ENCODE measurements at regions of chr19 and their contacts with region 1.

Region 1: GRCh38 chr19:21141787-21142464 is at the start of gene ZNF431:
- DNase-seq: peak; percentile 98
- H3K4me3 Mint-ChIP-seq: peak within 1 kb of the TSS; percentile 92
- H3K27ac Mint-ChIP-seq: peak within 1 kb of the TSS; percentile 97
- H3K4me1 Mint-ChIP-seq: peaks cover 16% of the 10 kb centered on the region
- H3K27me3 Mint-ChIP-seq: no peaks in the 10 kb centered on the region
- CTCF ChIP-seq: no peak
- total RNA-seq, gene ZNF431: 17.2 and 22.1 TPM in 2 replicates

Region 2: GRCh38 chr19:20923077-20923871 is 218.7 kb before region 1 on chr19 and contains the start of gene ZNF85:
- CTCF ChIA-PET with region 1: no interaction called
- POLR2A ChIA-PET with region 1: interaction called, 11 read pairs
- intact Hi-C with region 1: no loop called
- DNase-seq: peak; percentile 94
- H3K4me3 Mint-ChIP-seq: peak within 1 kb of the TSS; percentile 93
- H3K27ac Mint-ChIP-seq: peak within 1 kb of the TSS; percentile 97
- H3K4me1 Mint-ChIP-seq: no peaks in the 10 kb centered on the region
- H3K27me3 Mint-ChIP-seq: no peaks in the 10 kb centered on the region
- CTCF ChIP-seq: no peak
- total RNA-seq, gene ZNF85: 4.9 and 6.9 TPM in 2 replicates

Region 3: DNA sequence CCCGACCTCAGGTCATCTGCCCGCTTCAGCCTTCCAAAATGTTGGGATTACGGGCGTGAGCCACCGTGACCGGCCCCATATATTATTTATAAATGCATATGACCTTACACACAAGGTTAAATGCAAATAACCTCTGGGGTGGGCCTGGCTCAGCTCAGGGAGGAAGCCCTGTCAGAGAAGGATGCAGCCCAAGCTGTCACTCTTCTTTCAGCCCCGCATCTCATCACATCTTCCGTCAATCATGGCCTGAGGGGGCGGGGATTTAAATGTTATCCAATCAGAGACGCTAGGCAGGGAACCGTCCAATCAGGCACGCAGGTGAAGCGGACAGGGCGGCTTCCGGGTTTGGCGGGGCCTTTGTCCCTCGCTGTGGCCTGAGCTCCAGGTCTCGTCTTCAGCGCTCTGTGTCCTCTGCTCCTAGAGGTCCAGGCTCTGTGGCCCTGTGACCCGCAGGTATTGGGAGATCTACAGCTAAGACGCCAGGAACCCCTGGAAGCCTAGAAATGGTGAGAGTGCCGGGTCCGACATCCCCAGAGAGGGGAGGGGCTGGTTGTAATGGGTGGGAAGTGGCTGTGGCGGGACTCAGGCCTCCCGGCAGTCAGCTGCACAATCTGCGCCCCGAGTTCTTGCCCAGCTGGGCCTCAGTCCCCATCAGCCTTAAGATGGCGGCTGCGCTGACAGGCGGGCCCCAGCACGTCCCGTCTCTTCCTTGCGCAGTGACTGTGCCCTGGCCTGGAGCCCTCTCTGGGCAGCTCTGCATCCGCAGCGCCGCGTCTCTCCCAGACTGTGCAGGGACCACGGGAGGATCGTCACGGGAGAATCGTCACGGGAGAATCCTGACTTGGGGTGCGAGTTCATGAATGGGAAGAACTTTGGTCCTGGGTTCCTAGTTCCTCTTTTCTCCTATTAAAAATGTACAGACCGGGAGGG is 121.4 kb before region 1 on chr19 and contains the start of gene ZNF430:
- CTCF ChIA-PET with region 1: interaction called, 6 read pairs
- POLR2A ChIA-PET with region 1: interaction called, 72 read pairs
- intact Hi-C with region 1: loop called (anchors 2 kb)
- DNase-seq: peak; percentile 98
- H3K4me3 Mint-ChIP-seq: peak within 1 kb of the TSS; percentile 99
- H3K27ac Mint-ChIP-seq: peak within 1 kb of the TSS; percentile 100
- H3K4me1 Mint-ChIP-seq: peaks cover 24% of the 10 kb centered on the region
- H3K27me3 Mint-ChIP-seq: no peaks in the 10 kb centered on the region
- CTCF ChIP-seq: no peak
- total RNA-seq, gene ZNF430: 12.9 and 13.9 TPM in 2 replicates

Region 4: GRCh38 chr19:21082011-21082975 is 59.6 kb before region 1 on chr19 and contains the start of gene ZNF714:
- CTCF ChIA-PET with region 1: no interaction called
- POLR2A ChIA-PET with region 1: interaction called, 24 read pairs
- intact Hi-C with region 1: loop called (anchors 5 kb)
- DNase-seq: peak; percentile 95
- H3K4me3 Mint-ChIP-seq: peak within 1 kb of the TSS; percentile 94
- H3K27ac Mint-ChIP-seq: peak within 1 kb of the TSS; percentile 96
- H3K4me1 Mint-ChIP-seq: peaks cover 8% of the 10 kb centered on the region
- H3K27me3 Mint-ChIP-seq: no peaks in the 10 kb centered on the region
- CTCF ChIP-seq: no peak
- total RNA-seq, gene ZNF714: 10.0 and 11.0 TPM in 2 replicates

Region 5: DNA sequence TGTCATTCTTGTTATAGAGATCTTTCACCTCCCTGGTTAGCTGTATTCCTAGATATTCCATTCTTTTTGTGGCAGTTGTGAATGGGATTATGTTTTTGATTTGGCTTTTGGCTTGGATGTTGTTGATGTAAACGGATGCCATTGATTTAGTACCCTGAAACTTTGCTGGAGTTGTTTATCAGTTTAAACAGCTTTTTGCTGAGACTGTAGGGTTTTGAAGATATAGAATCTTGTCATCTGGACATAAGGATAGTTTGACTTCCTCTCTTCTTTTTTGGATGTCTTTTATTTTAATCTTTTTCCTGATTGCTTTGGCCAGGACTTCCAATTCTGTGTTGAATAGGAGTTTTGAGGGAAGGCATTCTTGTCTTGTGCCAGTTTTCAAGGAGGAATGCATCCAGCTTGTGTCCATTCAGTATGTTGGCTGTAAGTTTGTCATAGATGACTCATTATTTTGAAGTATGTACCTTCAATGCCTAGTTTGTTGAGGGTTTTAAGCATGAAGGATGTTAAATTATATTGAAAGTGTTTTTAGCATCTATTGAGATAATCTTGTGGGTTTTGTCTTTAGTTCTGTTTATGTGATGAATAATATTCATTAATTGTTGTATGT is 16.7 kb after region 1 on chr19:
- CTCF ChIA-PET with region 1: no interaction called
- POLR2A ChIA-PET with region 1: interaction called, 20 read pairs
- intact Hi-C with region 1: no loop called
- DNase-seq: peak; percentile 16
- H3K4me3 Mint-ChIP-seq: no peak overlapping the region
- H3K27ac Mint-ChIP-seq: peak overlapping the region; percentile 54
- H3K4me1 Mint-ChIP-seq: peaks cover 14% of the 10 kb centered on the region
- H3K27me3 Mint-ChIP-seq: no peaks in the 10 kb centered on the region
- CTCF ChIP-seq: no peak

Region 6: DNA sequence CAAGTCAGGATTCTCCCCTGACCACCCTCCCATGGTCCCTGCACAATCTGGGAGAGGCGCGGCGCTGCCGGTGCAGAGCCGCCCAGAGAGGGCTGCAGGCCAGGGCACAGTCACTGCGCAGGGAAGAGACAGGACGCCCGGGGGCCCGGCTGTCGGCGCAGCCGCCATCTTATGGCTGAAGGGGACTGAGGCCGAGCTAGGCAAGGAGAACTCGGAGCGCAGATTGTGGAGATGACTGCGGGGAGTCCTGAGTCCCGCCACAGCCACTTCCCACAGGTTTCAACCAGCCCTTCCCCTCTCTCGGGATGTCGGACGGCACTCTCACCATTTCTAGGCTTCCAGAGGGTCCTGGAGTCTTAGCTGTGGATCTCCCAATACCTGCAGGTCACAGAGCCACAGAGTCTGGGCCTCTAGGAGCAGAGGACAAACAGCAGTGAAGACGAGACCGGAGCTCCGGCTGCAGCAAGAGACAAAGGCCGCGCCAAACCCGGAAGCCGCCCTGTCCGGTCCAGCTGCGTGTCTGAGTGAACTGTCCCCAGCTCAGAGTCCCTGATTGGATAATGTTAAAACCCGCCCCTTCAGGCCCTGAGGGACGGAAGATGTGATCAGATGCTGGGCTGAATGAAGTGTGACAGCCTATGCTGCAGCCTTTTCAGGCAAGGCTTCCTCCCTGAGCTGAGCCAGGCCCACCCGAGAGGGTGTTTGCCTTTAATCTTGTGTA is 187.1 kb after region 1 on chr19 and contains the start of gene ZNF708:
- CTCF ChIA-PET with region 1: no interaction called
- POLR2A ChIA-PET with region 1: interaction called, 27 read pairs
- intact Hi-C with region 1: loop called (anchors 5 kb)
- DNase-seq: peak; percentile 94
- H3K4me3 Mint-ChIP-seq: peak within 1 kb of the TSS; percentile 98
- H3K27ac Mint-ChIP-seq: peak within 1 kb of the TSS; percentile 99
- H3K4me1 Mint-ChIP-seq: peaks cover 5% of the 10 kb centered on the region
- H3K27me3 Mint-ChIP-seq: no peaks in the 10 kb centered on the region
- CTCF ChIP-seq: no peak
- total RNA-seq, gene ZNF708: 5.3 and 7.8 TPM in 2 replicates